Motor neuron (in vitro differentiated cells): ENCODE measurements at regions of chr6 and their contacts with region 1.

Region 1: DNA sequence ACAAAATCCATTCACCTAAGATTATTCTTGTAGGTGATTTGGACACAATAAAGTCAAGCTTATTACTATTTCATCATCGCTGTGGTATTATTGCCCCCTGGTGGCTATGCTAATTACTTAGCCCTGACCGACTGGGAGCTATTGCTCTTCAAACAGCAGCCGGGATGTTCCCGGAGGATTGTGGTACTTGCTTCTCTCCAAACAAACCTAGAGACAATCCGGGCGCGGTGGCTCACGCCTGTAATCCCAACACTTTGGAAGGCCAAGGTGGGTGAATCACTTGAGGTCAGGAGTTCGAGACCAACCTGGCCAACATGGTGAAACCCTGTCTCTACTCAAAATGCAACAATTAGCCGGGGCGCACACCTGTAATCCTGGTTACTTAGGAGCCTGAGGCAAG is 15.4 kb upstream of the STMND1 start:
- ATAC-seq: peak in 6 of 8 experiments; percentile 34 to 94 (median 73)
- H3K4me3 ChIP-seq: no peak overlapping the region
- H3K27ac ChIP-seq: no peak overlapping the region
- H3K4me1 ChIP-seq: no peaks in the 10 kb centered on the region

Region 2: GRCh38 chr6:16625291-16626265 is 460.9 kb before region 1 on chr6:
- in situ Hi-C with region 1: no loop called
- ATAC-seq: peak in 3 of 8 experiments; percentile 41 to 72 (median 56)
- H3K4me3 ChIP-seq: no peak overlapping the region
- H3K27ac ChIP-seq: no peak overlapping the region
- H3K4me1 ChIP-seq: peaks cover 2 to 7% of the 10 kb centered on the region in 2 donors

Region 3: GRCh38 chr6:16803294-16804200 is 282.9 kb before region 1 on chr6:
- in situ Hi-C with region 1: loop called in 1 of 9 experiments (anchors 25 kb)
- ATAC-seq: peak in 7 of 8 experiments; percentile 9 to 91 (median 88)
- H3K4me3 ChIP-seq: peak overlapping the region; percentile 31 to 39 (median 36)
- H3K27ac ChIP-seq: peak overlapping the region; percentile 88 to 98
- H3K4me1 ChIP-seq: peaks cover 46 to 47% of the 10 kb centered on the region in 2 donors

Region 4: DNA sequence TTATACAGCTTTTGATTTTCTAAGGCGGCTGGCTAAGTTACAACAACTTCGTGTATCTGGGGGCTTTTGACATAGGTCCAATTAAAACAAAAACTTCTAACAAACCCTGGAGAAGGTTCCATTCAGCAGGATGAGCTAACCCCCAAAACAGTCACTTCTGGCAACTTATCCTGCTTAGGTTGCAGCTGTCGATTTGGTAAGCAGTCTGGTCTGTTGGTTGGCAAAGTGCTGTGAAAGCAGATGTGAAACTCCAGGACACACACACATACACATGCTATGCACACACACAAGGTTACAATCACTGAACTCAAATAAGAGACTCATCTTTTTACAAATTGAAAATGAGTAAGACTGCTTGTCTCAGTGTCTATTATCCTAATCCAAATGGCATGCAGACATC is 103.7 kb before region 1 on chr6:
- in situ Hi-C with region 1: loop called in 1 of 9 experiments (anchors 25 kb)
- ATAC-seq: peak in 1 of 8 experiments; percentile 39
- H3K4me3 ChIP-seq: no peak overlapping the region
- H3K27ac ChIP-seq: no peak overlapping the region
- H3K4me1 ChIP-seq: no peaks in the 10 kb centered on the region